Heart right ventricle (tissue), 16 donors: ENCODE measurements at regions of chr17 and their contacts with region 1.

Region 1: GRCh38 chr17:81419328-81419885 is 24.1 kb downstream of the BAHCC1 start:
- DNase-seq: peak; percentile 93 to 95
- ATAC-seq: peak; percentile 71 to 90 (median 86)
- H3K4me3 ChIP-seq: peak overlapping the region in 9 of 10 donors; percentile 2 to 50 (median 27)
- H3K27ac ChIP-seq: peak overlapping the region; percentile 44 to 99 (median 96)
- H3K4me1 ChIP-seq: peaks cover 56 to 77% (median 71%) of the 10 kb centered on the region in 9 donors
- H3K27me3 ChIP-seq: no peaks in the 10 kb centered on the region
- CTCF ChIP-seq: no peak

Region 2: DNA sequence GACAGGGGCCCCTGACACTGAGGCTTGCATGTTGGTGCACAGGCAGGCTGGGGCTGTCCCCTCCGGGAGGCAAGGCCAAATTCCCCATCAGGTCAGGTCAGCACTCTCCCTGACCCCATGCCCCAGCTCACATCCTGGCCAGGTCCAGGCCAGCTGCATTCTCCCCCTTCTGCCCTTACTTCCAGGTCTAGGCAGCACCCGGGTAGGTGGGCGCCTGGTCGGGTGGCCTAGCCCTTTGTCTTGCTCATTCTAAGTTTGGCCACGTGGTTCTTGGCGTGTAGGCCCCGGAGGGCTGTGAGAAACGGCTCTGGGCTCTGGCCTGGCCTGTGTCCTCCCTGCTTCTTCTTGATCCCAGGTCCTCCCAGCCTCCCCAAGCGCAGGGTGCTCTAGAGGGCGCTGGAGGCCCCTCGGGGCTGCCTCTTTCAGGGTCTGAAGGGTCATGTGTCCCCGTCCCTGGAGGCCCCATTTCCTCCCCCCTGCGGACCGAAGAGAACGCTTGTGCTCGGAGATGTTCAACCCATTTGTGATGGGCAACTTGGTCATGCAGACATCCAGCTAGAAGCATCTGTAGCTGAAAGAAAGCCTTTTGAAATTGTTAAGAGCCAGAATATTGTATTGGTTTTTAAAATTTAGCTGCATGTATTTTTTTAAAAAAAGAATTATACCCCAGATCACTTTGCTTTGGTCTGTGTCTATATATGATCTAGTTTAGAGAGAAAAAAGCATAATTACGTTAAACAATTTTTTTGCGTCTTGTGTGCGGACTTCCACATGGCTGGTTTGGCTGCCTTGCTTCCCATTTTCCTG is 17.5 kb before region 1 on chr17:
- intact Hi-C with region 1: loop called in 2 of 10 experiments (anchors 1 to 2 kb)
- DNase-seq: peak in 1 of 2 donors; percentile 69
- ATAC-seq: peak in 6 of 8 donors; percentile 2 to 25 (median 6)
- H3K4me3 ChIP-seq: peak overlapping the region in 8 of 10 donors; percentile 19 to 94 (median 78)
- H3K27ac ChIP-seq: peak overlapping the region; percentile 3 to 99 (median 96)
- H3K4me1 ChIP-seq: peaks cover 45 to 90% (median 66%) of the 10 kb centered on the region in 9 donors
- H3K27me3 ChIP-seq: peaks cover 0 to 28% (median 0%) of the 10 kb centered on the region in 7 donors
- CTCF ChIP-seq: peak in 7 of 9 donors; percentile 14 to 50 (median 37)